ENCODE measurements at regions of chr4 and their contacts with region 1.

Region 1: GRCh38 chr4:167614866-167615265 is 380.6 kb upstream of the SPOCK3 start:
- DNase-seq: no peak
- ATAC-seq: no peak
- H3K4me3 ChIP-seq: no peak overlapping the region
- H3K27ac ChIP-seq: no peak overlapping the region
- H3K4me1 ChIP-seq: no peaks in the 10 kb centered on the region
- H3K27me3 ChIP-seq: no peaks in the 10 kb centered on the region
- CTCF ChIP-seq: no peak
- POLR2A ChIP-seq: no peak
- RAD21 ChIP-seq: no peak

Region 2: GRCh38 chr4:167509551-167509950 is 105.3 kb before region 1 on chr4:
- CTCF ChIA-PET with region 1: no interaction called
- POLR2A ChIA-PET with region 1: no interaction called
- RAD21 ChIA-PET with region 1: interaction called in 1 of 2 experiments, 11 read pairs
- intact Hi-C with region 1: no loop called
- DNase-seq: no peak
- ATAC-seq: no peak
- H3K4me3 ChIP-seq: no peak overlapping the region
- H3K27ac ChIP-seq: no peak overlapping the region
- H3K4me1 ChIP-seq: no peaks in the 10 kb centered on the region
- H3K27me3 ChIP-seq: no peaks in the 10 kb centered on the region
- CTCF ChIP-seq: no peak
- POLR2A ChIP-seq: no peak
- RAD21 ChIP-seq: no peak

Measured in HCT116 (cell line).